ENCODE measurements at regions of chr1 and their contacts with region 1.

Region 1: DNA sequence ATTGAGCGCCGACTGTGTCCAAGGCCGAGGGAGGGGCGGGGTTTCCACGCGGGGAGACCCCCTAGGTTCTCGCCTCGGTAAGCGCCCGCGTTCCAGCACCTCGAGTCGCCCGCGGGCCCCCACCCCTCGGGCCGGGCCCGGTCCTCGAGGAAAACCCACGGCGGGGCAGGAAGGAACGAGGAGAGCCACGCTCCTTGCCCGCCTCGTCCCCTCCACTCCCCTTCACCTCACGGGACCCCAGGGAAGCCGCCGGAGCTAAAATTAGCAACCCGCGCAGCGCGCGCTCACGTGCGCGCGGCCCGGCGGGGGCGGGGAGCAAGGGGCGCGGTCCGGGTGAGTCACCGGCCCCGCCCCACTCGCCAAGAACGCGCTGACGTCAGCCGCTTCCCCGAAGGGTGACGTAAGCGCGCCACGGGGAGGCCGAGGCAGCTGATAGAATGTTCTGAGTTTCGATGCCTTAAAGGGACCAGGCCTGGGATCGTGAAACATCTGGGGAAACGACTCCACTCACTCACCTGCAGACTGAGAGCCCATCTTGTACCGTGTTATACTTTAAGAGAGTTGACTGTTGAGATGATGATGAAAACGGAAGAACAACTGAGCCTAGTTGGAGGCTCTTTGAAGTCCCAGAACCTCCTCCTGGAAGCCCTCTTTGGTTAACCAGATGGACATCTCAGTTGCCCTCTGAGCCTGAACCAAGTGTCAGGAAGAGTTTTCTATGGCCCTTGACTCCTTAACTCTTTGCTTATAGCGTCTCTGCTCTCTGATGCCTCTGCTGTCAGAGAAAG is 49.7 kb upstream of the ATF3 start:
- DNase-seq: peak; percentile 86 to 97
- H3K4me3 ChIP-seq: peak overlapping the region; percentile 55 to 85
- H3K27ac ChIP-seq: peak overlapping the region; percentile 86 to 93
- H3K4me1 ChIP-seq: peaks cover 4 to 11% of the 10 kb centered on the region in 2 donors
- H3K27me3 ChIP-seq: no peaks in the 10 kb centered on the region
- CTCF ChIP-seq: no peak

Region 2: GRCh38 chr1:212218911-212219310 is 340.0 kb before region 1 on chr1:
- intact Hi-C with region 1: no loop called
- DNase-seq: no peak
- H3K4me3 ChIP-seq: no peak overlapping the region
- H3K27ac ChIP-seq: no peak overlapping the region
- H3K4me1 ChIP-seq: no peaks in the 10 kb centered on the region
- H3K27me3 ChIP-seq: no peaks in the 10 kb centered on the region
- CTCF ChIP-seq: no peak

Region 3: GRCh38 chr1:212488397-212489283 is 70.2 kb before region 1 on chr1:
- intact Hi-C with region 1: loop called (anchors 2 kb)
- DNase-seq: peak; percentile 81 to 89
- H3K4me3 ChIP-seq: no peak overlapping the region
- H3K27ac ChIP-seq: peak overlapping the region; percentile 73 to 80
- H3K4me1 ChIP-seq: peaks cover 8 to 15% of the 10 kb centered on the region in 2 donors
- H3K27me3 ChIP-seq: no peaks in the 10 kb centered on the region
- CTCF ChIP-seq: no peak

Region 4: DNA sequence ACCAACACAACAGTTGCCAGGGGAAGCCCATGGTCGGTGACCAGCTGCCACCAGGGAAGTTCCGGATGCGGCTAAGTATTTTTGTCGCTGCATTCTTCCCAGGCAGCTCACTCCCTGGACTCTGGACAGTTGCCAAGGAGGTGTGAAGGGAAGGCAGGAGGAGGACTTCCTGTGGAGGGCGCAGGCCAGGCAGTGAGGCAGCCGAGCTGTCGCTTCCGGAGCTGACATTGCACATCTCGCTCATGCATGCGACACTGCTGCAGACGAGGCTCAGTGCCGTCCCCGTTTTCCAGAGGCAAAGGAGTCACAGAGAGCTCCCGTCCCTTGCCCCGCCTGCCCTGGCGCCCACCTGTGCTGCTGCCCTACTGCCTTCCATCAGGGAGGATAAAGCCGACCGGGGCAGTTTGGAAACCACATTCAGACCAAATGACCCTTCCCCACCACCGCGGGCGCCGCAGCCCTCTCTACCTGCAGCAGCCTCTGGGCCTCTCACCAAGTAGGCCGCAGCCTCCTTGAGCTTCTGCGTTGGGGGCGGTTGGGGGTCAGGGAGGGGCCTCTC is 44.8 kb before region 1 on chr1:
- intact Hi-C with region 1: loop called (anchors 2 kb)
- DNase-seq: peak in 1 of 2 donors; percentile 77
- H3K4me3 ChIP-seq: peak overlapping the region in 1 of 2 donors; percentile 58
- H3K27ac ChIP-seq: peak overlapping the region in 1 of 2 donors; percentile 6
- H3K4me1 ChIP-seq: peaks cover 0 to 8% of the 10 kb centered on the region in 2 donors
- H3K27me3 ChIP-seq: no peaks in the 10 kb centered on the region
- CTCF ChIP-seq: no peak

Region 5: DNA sequence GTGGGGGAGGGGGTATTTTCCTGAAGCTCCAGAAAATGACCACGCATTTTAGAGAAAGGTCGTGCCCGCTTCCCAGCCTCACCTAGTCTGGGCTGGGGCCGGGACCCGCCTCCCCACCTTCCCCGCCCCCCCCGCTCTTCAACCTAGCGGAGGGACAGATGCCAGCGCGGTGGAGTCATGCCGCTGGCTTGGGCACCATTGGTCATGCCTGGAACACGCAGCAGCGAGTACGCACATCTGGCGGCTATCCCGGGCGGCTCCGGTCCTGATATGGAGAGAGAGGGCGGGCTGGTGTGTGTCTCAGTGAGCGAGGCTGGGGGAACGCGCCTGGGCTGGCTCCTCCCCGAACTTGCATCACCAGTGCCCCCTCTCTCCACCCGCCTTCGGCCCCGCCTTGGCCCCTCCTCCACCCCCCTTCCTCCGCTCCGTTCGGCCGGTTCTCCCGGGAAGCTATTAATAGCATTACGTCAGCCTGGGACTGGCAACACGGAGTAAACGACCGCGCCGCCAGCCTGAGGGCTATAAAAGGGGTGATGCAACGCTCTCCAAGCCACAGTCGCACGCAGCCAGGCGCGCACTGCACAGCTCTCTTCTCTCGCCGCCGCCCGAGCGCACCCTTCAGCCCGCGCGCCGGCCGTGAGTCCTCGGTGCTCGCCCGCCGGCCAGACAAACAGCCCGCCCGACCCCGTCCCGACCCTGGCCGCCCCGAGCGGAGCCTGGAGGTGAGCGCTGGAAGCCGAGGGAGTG is 49.5 kb after region 1 on chr1 and contains the start of gene ATF3:
- intact Hi-C with region 1: loop called (anchors 1 kb)
- DNase-seq: peak; percentile 99 to 100
- H3K4me3 ChIP-seq: peak within 1 kb of the TSS; percentile 64 to 78
- H3K27ac ChIP-seq: peak within 1 kb of the TSS; percentile 96 to 99
- H3K4me1 ChIP-seq: peaks cover 0 to 25% of the 10 kb centered on the region in 2 donors
- H3K27me3 ChIP-seq: no peaks in the 10 kb centered on the region
- CTCF ChIP-seq: no peak
- total RNA-seq, gene ATF3: 79.1 TPM

Region 6: GRCh38 chr1:212699104-212699624 is 140.3 kb after region 1 on chr1:
- intact Hi-C with region 1: loop called (anchors 5 kb)
- DNase-seq: peak in 1 of 2 donors; percentile 74
- H3K4me3 ChIP-seq: peak overlapping the region; percentile 73 to 90
- H3K27ac ChIP-seq: peak overlapping the region; percentile 81 to 88
- H3K4me1 ChIP-seq: peaks cover 5 to 13% of the 10 kb centered on the region in 2 donors
- H3K27me3 ChIP-seq: no peaks in the 10 kb centered on the region
- CTCF ChIP-seq: peak in 2 of 3 experiments; percentile 47 to 61

Region 7: GRCh38 chr1:212791676-212792395 is 232.9 kb after region 1 on chr1 and contains the starts of genes NSL1 and TATDN3:
- intact Hi-C with region 1: loop called (anchors 5 kb)
- DNase-seq: peak; percentile 45 to 92
- H3K4me3 ChIP-seq: peak within 1 kb of the TSS; percentile 71 to 94
- H3K27ac ChIP-seq: peak within 1 kb of the TSS; percentile 89 to 93
- H3K4me1 ChIP-seq: peaks cover 0 to 17% of the 10 kb centered on the region in 2 donors
- H3K27me3 ChIP-seq: no peaks in the 10 kb centered on the region
- CTCF ChIP-seq: no peak
- total RNA-seq, gene NSL1: 69.1 TPM
- total RNA-seq, gene TATDN3: 2.7 TPM